ENCODE measurements at regions of chr3 and their contacts with region 1.

Region 1: GRCh38 chr3:24237971-24238767 is 256.5 kb downstream of the THRB start:
- DNase-seq: peak; percentile 53 to 74
- H3K4me3 ChIP-seq: no peak overlapping the region
- H3K4me3 Mint-ChIP-seq: no peak overlapping the region
- H3K27ac Mint-ChIP-seq: no peak overlapping the region
- H3K4me1 ChIP-seq: no peaks in the 10 kb centered on the region
- H3K4me1 Mint-ChIP-seq: no peaks in the 10 kb centered on the region
- H3K27me3 ChIP-seq: no peaks in the 10 kb centered on the region
- H3K27me3 Mint-ChIP-seq: no peaks in the 10 kb centered on the region
- CTCF ChIP-seq: peak; percentile 57 to 75

Region 2: GRCh38 chr3:23888617-23889228 is 349.4 kb before region 1 on chr3:
- CTCF ChIA-PET with region 1: no interaction called
- POLR2A ChIA-PET with region 1: no interaction called
- intact Hi-C with region 1: loop called (anchors 10 kb)
- DNase-seq: peak in 1 of 2 experiments; percentile 21
- H3K4me3 ChIP-seq: no peak overlapping the region
- H3K4me3 Mint-ChIP-seq: no peak overlapping the region
- H3K27ac Mint-ChIP-seq: no peak overlapping the region
- H3K4me1 ChIP-seq: no peaks in the 10 kb centered on the region
- H3K4me1 Mint-ChIP-seq: no peaks in the 10 kb centered on the region
- H3K27me3 ChIP-seq: no peaks in the 10 kb centered on the region
- H3K27me3 Mint-ChIP-seq: no peaks in the 10 kb centered on the region
- CTCF ChIP-seq: peak; percentile 60 to 65

Region 3: GRCh38 chr3:23999012-23999641 is 239.0 kb before region 1 on chr3:
- CTCF ChIA-PET with region 1: no interaction called
- POLR2A ChIA-PET with region 1: no interaction called
- intact Hi-C with region 1: loop called (anchors 1 kb)
- DNase-seq: peak; percentile 60 to 77
- H3K4me3 ChIP-seq: no peak overlapping the region
- H3K4me3 Mint-ChIP-seq: no peak overlapping the region
- H3K27ac Mint-ChIP-seq: no peak overlapping the region
- H3K4me1 ChIP-seq: no peaks in the 10 kb centered on the region
- H3K4me1 Mint-ChIP-seq: peaks cover 5% of the 10 kb centered on the region
- H3K27me3 ChIP-seq: no peaks in the 10 kb centered on the region
- H3K27me3 Mint-ChIP-seq: no peaks in the 10 kb centered on the region
- CTCF ChIP-seq: peak; percentile 83 to 90

Region 4: DNA sequence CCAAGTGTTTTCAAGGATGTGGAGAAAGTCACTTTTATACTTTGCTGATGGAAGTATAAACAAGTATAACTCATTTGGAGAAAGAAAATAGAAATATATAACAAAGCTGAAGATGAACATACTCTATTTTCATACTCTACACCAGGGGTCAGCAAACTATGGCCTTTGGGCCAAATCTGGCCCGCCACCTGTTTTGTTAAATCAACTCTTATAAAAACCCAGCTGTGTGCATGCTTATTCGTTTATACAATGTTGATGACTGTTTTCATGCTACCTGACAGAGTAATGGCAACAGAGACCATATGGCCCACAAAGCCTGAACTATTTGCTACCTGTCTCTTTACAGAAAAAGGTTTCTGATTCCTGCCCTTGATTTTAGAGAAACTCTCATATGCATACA is 169.1 kb before region 1 on chr3:
- CTCF ChIA-PET with region 1: no interaction called
- POLR2A ChIA-PET with region 1: no interaction called
- intact Hi-C with region 1: loop called (anchors 1 kb)
- DNase-seq: peak in 1 of 2 experiments; percentile 38
- H3K4me3 ChIP-seq: no peak overlapping the region
- H3K4me3 Mint-ChIP-seq: no peak overlapping the region
- H3K27ac Mint-ChIP-seq: no peak overlapping the region
- H3K4me1 ChIP-seq: no peaks in the 10 kb centered on the region
- H3K4me1 Mint-ChIP-seq: no peaks in the 10 kb centered on the region
- H3K27me3 ChIP-seq: no peaks in the 10 kb centered on the region
- H3K27me3 Mint-ChIP-seq: no peaks in the 10 kb centered on the region
- CTCF ChIP-seq: peak; percentile 38 to 51

Region 5: GRCh38 chr3:24185738-24186384 is 52.3 kb before region 1 on chr3:
- CTCF ChIA-PET with region 1: interaction called, 3 read pairs
- POLR2A ChIA-PET with region 1: no interaction called
- intact Hi-C with region 1: loop called (anchors 1 kb)
- DNase-seq: peak; percentile 37 to 48
- H3K4me3 ChIP-seq: no peak overlapping the region
- H3K4me3 Mint-ChIP-seq: no peak overlapping the region
- H3K27ac Mint-ChIP-seq: no peak overlapping the region
- H3K4me1 ChIP-seq: peaks cover 16% of the 10 kb centered on the region; the same call in 1 of the 2 replicates
- H3K4me1 Mint-ChIP-seq: peaks cover 7% of the 10 kb centered on the region
- H3K27me3 ChIP-seq: no peaks in the 10 kb centered on the region
- H3K27me3 Mint-ChIP-seq: no peaks in the 10 kb centered on the region
- CTCF ChIP-seq: peak; percentile 48 to 67

Region 6: GRCh38 chr3:24730173-24730572 is 492.0 kb after region 1 on chr3:
- CTCF ChIA-PET with region 1: no interaction called
- POLR2A ChIA-PET with region 1: no interaction called
- intact Hi-C with region 1: no loop called
- DNase-seq: no peak
- H3K4me3 ChIP-seq: no peak overlapping the region
- H3K4me3 Mint-ChIP-seq: no peak overlapping the region
- H3K27ac Mint-ChIP-seq: no peak overlapping the region
- H3K4me1 ChIP-seq: peaks cover 4% of the 10 kb centered on the region; the same call in 1 of the 2 replicates
- H3K4me1 Mint-ChIP-seq: no peaks in the 10 kb centered on the region
- H3K27me3 ChIP-seq: no peaks in the 10 kb centered on the region
- H3K27me3 Mint-ChIP-seq: peaks cover 8% of the 10 kb centered on the region
- CTCF ChIP-seq: no peak

Measured in Caco-2 (cell line).